ENCODE measurements at regions of chr19 and their contacts with region 1.

Region 1: GRCh38 chr19:2168619-2169424 is 5.1 kb downstream of the DOT1L start:
- DNase-seq: peak; percentile 81
- ATAC-seq: peak; percentile 44
- H3K4me3 ChIP-seq: peak overlapping the region; percentile 16 to 64 (median 37)
- H3K4me3 Mint-ChIP-seq: peak overlapping the region; percentile 88
- H3K27ac ChIP-seq: peak overlapping the region; percentile 90 to 95
- H3K27ac Mint-ChIP-seq: peak overlapping the region; percentile 95
- H3K4me1 ChIP-seq: peaks cover 66 to 88% of the 10 kb centered on the region in 2 donors
- H3K4me1 Mint-ChIP-seq: peaks cover 69% of the 10 kb centered on the region
- H3K27me3 ChIP-seq: no peaks in the 10 kb centered on the region
- H3K27me3 Mint-ChIP-seq: no peaks in the 10 kb centered on the region
- CTCF ChIP-seq: no peak

Region 2: GRCh38 chr19:1896508-1896907 is 272.3 kb before region 1 on chr19:
- CTCF ChIA-PET with region 1: no interaction called
- POLR2A ChIA-PET with region 1: interaction called, 10 read pairs
- intact Hi-C with region 1: no loop called
- DNase-seq: no peak
- ATAC-seq: no peak
- H3K4me3 ChIP-seq: peak overlapping the region in 1 of 5 experiments; percentile 63
- H3K4me3 Mint-ChIP-seq: peak overlapping the region; percentile 54
- H3K27ac ChIP-seq: peak overlapping the region; percentile 80 to 84
- H3K27ac Mint-ChIP-seq: peak overlapping the region; percentile 81
- H3K4me1 ChIP-seq: peaks cover 44 to 56% of the 10 kb centered on the region in 2 donors
- H3K4me1 Mint-ChIP-seq: peaks cover 37% of the 10 kb centered on the region
- H3K27me3 ChIP-seq: no peaks in the 10 kb centered on the region
- H3K27me3 Mint-ChIP-seq: no peaks in the 10 kb centered on the region
- CTCF ChIP-seq: no peak

Region 3: GRCh38 chr19:2041683-2042484 is 126.9 kb before region 1 on chr19:
- CTCF ChIA-PET with region 1: no interaction called
- POLR2A ChIA-PET with region 1: interaction called, 15 read pairs
- intact Hi-C with region 1: no loop called
- DNase-seq: peak; percentile 98
- ATAC-seq: peak; percentile 73
- H3K4me3 ChIP-seq: peak overlapping the region in 4 of 5 experiments; percentile 32 to 55 (median 42)
- H3K4me3 Mint-ChIP-seq: peak overlapping the region; percentile 74
- H3K27ac ChIP-seq: peak overlapping the region; percentile 98 to 99
- H3K27ac Mint-ChIP-seq: peak overlapping the region; percentile 87
- H3K4me1 ChIP-seq: peaks cover 54 to 67% of the 10 kb centered on the region in 2 donors
- H3K4me1 Mint-ChIP-seq: peaks cover 63% of the 10 kb centered on the region
- H3K27me3 ChIP-seq: no peaks in the 10 kb centered on the region
- H3K27me3 Mint-ChIP-seq: no peaks in the 10 kb centered on the region
- CTCF ChIP-seq: no peak

Region 4: GRCh38 chr19:2157452-2157851 is 11.4 kb before region 1 on chr19:
- CTCF ChIA-PET with region 1: interaction called, 22 read pairs
- POLR2A ChIA-PET with region 1: interaction called, 7 read pairs
- intact Hi-C with region 1: loop called (anchors 2 kb)
- DNase-seq: no peak
- ATAC-seq: no peak
- H3K4me3 ChIP-seq: no peak overlapping the region
- H3K4me3 Mint-ChIP-seq: no peak overlapping the region
- H3K27ac ChIP-seq: no peak overlapping the region
- H3K27ac Mint-ChIP-seq: no peak overlapping the region
- H3K4me1 ChIP-seq: peaks cover 0 to 9% of the 10 kb centered on the region in 2 donors
- H3K4me1 Mint-ChIP-seq: peaks cover 10% of the 10 kb centered on the region
- H3K27me3 ChIP-seq: no peaks in the 10 kb centered on the region
- H3K27me3 Mint-ChIP-seq: no peaks in the 10 kb centered on the region
- CTCF ChIP-seq: no peak

Region 5: DNA sequence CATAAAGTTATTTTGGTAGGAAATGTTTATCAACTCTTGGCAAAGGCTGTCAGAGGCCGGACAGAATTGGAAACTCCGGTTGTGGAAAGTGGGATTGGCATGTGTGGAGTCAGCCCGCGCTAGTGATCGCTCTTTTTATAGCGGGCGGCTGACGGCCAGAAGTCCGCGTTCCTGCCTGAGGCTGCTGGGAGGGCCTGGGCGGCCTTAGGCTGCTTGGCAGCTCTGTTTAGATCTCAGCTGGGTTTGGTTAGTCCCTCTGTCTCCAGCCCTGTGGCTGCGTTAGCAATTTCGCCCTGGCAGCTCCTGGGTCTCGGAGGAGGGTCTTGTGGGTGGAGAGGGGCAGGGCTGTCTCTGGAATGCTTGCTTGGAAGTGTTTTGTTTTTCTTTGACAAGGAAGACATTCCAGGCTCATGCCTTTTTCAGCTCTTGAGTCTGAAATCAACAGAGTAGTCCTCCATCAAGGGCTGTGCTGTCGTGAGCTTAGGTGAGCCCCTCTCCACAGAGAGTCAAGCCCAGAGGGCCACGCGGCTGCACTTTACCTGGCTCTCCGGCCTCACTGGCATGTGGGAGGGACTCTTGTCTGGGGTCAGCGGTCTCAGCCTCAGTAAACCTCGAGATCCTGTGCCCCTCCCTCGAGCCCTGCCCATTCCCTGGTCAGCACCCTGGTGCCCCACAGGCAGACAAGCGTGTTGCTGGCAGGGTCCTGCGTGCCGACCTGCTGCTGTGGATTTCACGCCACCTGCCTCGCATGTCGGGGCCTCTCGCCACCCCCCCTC is 17.4 kb after region 1 on chr19:
- CTCF ChIA-PET with region 1: interaction called, 3 read pairs
- POLR2A ChIA-PET with region 1: interaction called, 5 read pairs
- intact Hi-C with region 1: loop called (anchors 1 kb)
- DNase-seq: no peak
- ATAC-seq: no peak
- H3K4me3 ChIP-seq: no peak overlapping the region
- H3K4me3 Mint-ChIP-seq: no peak overlapping the region
- H3K27ac ChIP-seq: no peak overlapping the region
- H3K27ac Mint-ChIP-seq: peak overlapping the region; percentile 32
- H3K4me1 ChIP-seq: peaks cover 30 to 40% of the 10 kb centered on the region in 2 donors
- H3K4me1 Mint-ChIP-seq: peaks cover 55% of the 10 kb centered on the region
- H3K27me3 ChIP-seq: no peaks in the 10 kb centered on the region
- H3K27me3 Mint-ChIP-seq: no peaks in the 10 kb centered on the region
- CTCF ChIP-seq: no peak

Region 6: GRCh38 chr19:2221918-2222317 is 53.1 kb after region 1 on chr19:
- CTCF ChIA-PET with region 1: interaction called, 6 read pairs
- POLR2A ChIA-PET with region 1: interaction called, 3 read pairs
- intact Hi-C with region 1: loop called (anchors 1 kb)
- DNase-seq: no peak
- ATAC-seq: no peak
- H3K4me3 ChIP-seq: no peak overlapping the region
- H3K4me3 Mint-ChIP-seq: no peak overlapping the region
- H3K27ac ChIP-seq: no peak overlapping the region
- H3K27ac Mint-ChIP-seq: no peak overlapping the region
- H3K4me1 ChIP-seq: peaks cover 16 to 25% of the 10 kb centered on the region in 2 donors
- H3K4me1 Mint-ChIP-seq: peaks cover 29% of the 10 kb centered on the region
- H3K27me3 ChIP-seq: no peaks in the 10 kb centered on the region
- H3K27me3 Mint-ChIP-seq: no peaks in the 10 kb centered on the region
- CTCF ChIP-seq: no peak

Measured in B cell (primary cell).